WTC11 (cell line): ENCODE measurements at regions of chr21 and their contacts with region 1.

Region 1: GRCh38 chr21:33894736-33895288 is 20.8 kb downstream of the ATP5PO start:
- DNase-seq: peak; percentile 84
- ATAC-seq: peak; percentile 88
- H3K4me3 Mint-ChIP-seq: peak overlapping the region; percentile 51
- H3K27ac Mint-ChIP-seq: peak overlapping the region; percentile 34; the same call in 1 of the 2 replicates
- H3K4me1 Mint-ChIP-seq: peaks cover 21% of the 10 kb centered on the region
- H3K27me3 Mint-ChIP-seq: 0 out of 2 replicates have a peak, but pooled peaks cover 6% of the 10 kb centered on the region
- CTCF ChIP-seq: no peak; the same call in 1 of the 2 replicates

Region 2: DNA sequence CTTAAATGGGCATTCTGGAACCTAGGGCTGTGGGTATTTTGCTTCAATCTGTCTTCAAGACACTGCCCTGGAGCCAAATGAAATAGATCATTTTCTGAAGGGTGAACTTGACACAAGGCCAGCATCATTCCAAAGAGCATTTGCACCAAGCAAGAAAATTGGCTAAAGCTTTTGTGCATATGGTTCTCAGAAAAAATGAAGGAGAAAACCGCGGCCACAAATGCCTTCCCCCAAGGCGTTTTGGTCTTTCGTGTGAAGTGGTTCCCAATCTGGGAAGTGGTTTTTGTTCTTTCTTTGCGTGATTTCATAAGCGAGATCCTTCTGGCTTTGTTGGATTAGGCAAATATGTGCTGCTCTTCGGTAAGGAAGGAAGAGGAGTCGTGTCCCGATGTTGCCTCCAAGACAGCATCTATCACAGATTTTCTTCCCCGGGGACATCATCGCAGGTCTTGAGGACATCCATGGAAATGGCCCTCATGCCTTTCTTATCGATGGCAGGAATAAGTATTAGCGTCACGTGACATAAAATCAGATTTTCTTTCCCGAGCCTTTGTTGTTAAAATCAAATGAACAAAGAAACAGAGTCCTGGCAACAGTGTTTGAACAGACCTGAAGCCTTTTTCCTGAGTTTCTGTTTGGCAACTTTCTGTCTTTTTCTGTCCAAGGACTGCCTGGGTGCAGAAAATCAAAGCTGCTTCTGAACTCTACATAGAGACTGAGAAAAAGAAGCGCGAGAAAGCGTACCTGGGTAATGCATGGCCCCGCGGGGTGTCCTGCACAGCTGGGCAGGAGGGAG is 10.2 kb before region 1 on chr21:
- CTCF ChIA-PET with region 1: interaction called, 15 read pairs
- POLR2A ChIA-PET with region 1: no interaction called
- DNase-seq: no peak
- ATAC-seq: no peak
- H3K4me3 Mint-ChIP-seq: no peak overlapping the region
- H3K27ac Mint-ChIP-seq: peak overlapping the region; percentile 30
- H3K4me1 Mint-ChIP-seq: peaks cover 17% of the 10 kb centered on the region
- H3K27me3 Mint-ChIP-seq: no peaks in the 10 kb centered on the region; the same call in 1 of the 2 replicates
- CTCF ChIP-seq: no peak

Region 3: DNA sequence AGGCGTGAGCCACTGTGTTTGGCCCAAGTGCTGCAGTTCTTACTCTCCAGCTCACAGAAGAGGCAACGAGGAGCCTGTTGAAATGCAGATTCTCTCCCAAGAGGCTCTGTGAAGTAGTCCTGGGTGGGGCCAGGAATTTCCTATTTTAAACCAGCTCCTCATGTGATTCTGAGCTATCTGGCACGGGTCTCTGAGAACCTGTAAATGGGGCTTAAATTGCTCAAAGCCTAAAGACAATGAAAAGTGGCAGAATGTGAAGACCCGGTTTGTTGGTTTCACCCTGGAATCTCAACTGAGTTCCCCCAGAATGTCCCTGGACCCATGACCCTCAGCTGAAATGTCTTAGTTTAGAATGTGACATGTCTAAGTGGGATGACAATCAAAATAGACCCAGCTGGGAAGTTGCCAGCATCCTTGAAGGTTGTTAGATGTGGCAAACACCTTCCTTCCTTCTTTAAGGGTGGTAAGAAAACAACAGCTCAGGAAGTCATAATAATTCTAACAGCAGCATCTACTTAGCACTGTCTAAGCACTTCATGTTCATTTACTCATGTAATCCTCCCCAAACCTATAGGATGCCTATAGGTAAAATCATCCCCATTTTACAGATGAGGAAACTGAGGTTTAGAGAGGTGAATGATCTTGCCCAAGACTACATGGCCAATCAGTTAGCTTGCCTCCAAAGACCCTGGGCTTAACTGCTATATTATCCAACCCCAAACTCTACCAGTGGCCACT is 41.7 kb after region 1 on chr21:
- CTCF ChIA-PET with region 1: no interaction called
- POLR2A ChIA-PET with region 1: no interaction called
- DNase-seq: no peak
- ATAC-seq: peak; percentile 70
- H3K4me3 Mint-ChIP-seq: no peak overlapping the region
- H3K27ac Mint-ChIP-seq: 0 out of 2 replicates have a peak overlapping the region, but pooled peaks have one; percentile 11
- H3K4me1 Mint-ChIP-seq: peaks cover 32% of the 10 kb centered on the region
- H3K27me3 Mint-ChIP-seq: no peaks in the 10 kb centered on the region; the same call in 1 of the 2 replicates
- CTCF ChIP-seq: no peak